ENCODE measurements at regions of chr7 and their contacts with region 1.

Region 1: GRCh38 chr7:150898475-150899011 is 46.2 kb downstream of the AOC1 start:
- DNase-seq: peak; percentile 85
- ATAC-seq: peak; percentile 89
- H3K4me3 Mint-ChIP-seq: no peak overlapping the region
- H3K27ac Mint-ChIP-seq: no peak overlapping the region
- H3K4me1 Mint-ChIP-seq: peaks cover 14% of the 10 kb centered on the region
- H3K27me3 Mint-ChIP-seq: peaks cover 58% of the 10 kb centered on the region
- CTCF ChIP-seq: peak; percentile 98

Region 2: GRCh38 chr7:150871601-150872000 is 26.9 kb before region 1 on chr7:
- CTCF ChIA-PET with region 1: interaction called, 48 read pairs
- POLR2A ChIA-PET with region 1: no interaction called
- intact Hi-C with region 1: no loop called
- DNase-seq: no peak
- ATAC-seq: no peak
- H3K4me3 Mint-ChIP-seq: no peak overlapping the region
- H3K27ac Mint-ChIP-seq: no peak overlapping the region
- H3K4me1 Mint-ChIP-seq: peaks cover 10% of the 10 kb centered on the region
- H3K27me3 Mint-ChIP-seq: peaks cover 8% of the 10 kb centered on the region
- CTCF ChIP-seq: no peak

Region 3: GRCh38 chr7:150917969-150918368 is 19.4 kb after region 1 on chr7:
- CTCF ChIA-PET with region 1: interaction called, 32 read pairs
- POLR2A ChIA-PET with region 1: no interaction called
- intact Hi-C with region 1: no loop called
- DNase-seq: no peak
- ATAC-seq: no peak
- H3K4me3 Mint-ChIP-seq: no peak overlapping the region
- H3K27ac Mint-ChIP-seq: no peak overlapping the region
- H3K4me1 Mint-ChIP-seq: no peaks in the 10 kb centered on the region
- H3K27me3 Mint-ChIP-seq: peaks cover 9% of the 10 kb centered on the region
- CTCF ChIP-seq: no peak

Region 4: GRCh38 chr7:150962553-150963399 is 64.2 kb after region 1 on chr7:
- CTCF ChIA-PET with region 1: interaction called, 11 read pairs
- POLR2A ChIA-PET with region 1: no interaction called
- intact Hi-C with region 1: no loop called
- DNase-seq: peak; percentile 69
- ATAC-seq: peak; percentile 98
- H3K4me3 Mint-ChIP-seq: no peak overlapping the region
- H3K27ac Mint-ChIP-seq: no peak overlapping the region
- H3K4me1 Mint-ChIP-seq: peaks cover 2% of the 10 kb centered on the region
- H3K27me3 Mint-ChIP-seq: peaks cover 16% of the 10 kb centered on the region
- CTCF ChIP-seq: peak; percentile 90

Region 5: DNA sequence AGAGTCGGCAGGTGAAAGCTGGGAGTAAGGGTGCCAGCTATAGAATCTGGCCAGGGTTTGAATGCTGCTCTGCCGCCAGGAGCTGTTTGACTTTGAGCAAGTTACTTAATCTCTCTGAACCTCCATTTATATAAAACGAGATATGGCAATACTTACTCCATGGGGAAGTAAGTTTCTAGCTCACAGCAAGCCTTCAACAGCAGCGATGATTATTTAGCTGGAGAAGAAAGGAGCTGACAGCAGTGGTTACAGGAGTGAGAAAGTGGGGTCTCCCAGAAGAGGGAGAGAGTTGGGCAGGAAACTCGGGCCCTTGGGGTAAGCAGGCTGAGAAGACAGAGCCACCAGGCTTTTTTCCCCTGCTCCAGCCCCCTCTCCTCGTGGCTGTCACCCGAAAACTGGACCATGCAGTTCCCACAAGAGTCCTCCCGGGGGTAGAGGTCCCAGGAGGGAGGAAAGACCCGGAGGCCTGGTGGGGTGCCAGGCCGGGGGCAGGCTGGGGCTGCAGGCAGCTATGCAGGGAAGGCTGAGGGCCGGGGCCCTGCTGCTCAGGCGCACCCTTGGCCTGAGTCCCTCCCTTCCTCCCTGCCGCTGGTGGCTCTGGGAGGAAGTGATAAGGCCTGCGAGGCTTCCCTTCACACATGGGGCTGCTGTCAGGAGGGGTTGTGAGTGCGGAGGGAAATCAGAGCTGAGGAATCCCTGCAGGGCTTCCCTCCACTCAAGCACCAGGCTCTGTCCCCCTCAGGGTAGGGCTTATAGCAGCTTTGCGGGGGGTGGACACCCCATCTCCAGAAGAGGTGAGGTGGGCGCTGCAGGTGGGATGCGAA is 95.8 kb after region 1 on chr7:
- CTCF ChIA-PET with region 1: interaction called, 19 read pairs
- POLR2A ChIA-PET with region 1: no interaction called
- intact Hi-C with region 1: loop called (anchors 2 kb)
- DNase-seq: no peak
- ATAC-seq: peak; percentile 66
- H3K4me3 Mint-ChIP-seq: peak overlapping the region; percentile 15
- H3K27ac Mint-ChIP-seq: no peak overlapping the region
- H3K4me1 Mint-ChIP-seq: peaks cover 35% of the 10 kb centered on the region
- H3K27me3 Mint-ChIP-seq: no peaks in the 10 kb centered on the region
- CTCF ChIP-seq: no peak

Region 6: GRCh38 chr7:151110941-151111645 is 212.6 kb after region 1 on chr7:
- CTCF ChIA-PET with region 1: interaction called, 14 read pairs
- POLR2A ChIA-PET with region 1: no interaction called
- intact Hi-C with region 1: no loop called
- DNase-seq: peak; percentile 83
- ATAC-seq: peak; percentile 74
- H3K4me3 Mint-ChIP-seq: no peak overlapping the region
- H3K27ac Mint-ChIP-seq: no peak overlapping the region
- H3K4me1 Mint-ChIP-seq: peaks cover 4% of the 10 kb centered on the region
- H3K27me3 Mint-ChIP-seq: peaks cover 17% of the 10 kb centered on the region
- CTCF ChIP-seq: peak; percentile 91

Region 7: DNA sequence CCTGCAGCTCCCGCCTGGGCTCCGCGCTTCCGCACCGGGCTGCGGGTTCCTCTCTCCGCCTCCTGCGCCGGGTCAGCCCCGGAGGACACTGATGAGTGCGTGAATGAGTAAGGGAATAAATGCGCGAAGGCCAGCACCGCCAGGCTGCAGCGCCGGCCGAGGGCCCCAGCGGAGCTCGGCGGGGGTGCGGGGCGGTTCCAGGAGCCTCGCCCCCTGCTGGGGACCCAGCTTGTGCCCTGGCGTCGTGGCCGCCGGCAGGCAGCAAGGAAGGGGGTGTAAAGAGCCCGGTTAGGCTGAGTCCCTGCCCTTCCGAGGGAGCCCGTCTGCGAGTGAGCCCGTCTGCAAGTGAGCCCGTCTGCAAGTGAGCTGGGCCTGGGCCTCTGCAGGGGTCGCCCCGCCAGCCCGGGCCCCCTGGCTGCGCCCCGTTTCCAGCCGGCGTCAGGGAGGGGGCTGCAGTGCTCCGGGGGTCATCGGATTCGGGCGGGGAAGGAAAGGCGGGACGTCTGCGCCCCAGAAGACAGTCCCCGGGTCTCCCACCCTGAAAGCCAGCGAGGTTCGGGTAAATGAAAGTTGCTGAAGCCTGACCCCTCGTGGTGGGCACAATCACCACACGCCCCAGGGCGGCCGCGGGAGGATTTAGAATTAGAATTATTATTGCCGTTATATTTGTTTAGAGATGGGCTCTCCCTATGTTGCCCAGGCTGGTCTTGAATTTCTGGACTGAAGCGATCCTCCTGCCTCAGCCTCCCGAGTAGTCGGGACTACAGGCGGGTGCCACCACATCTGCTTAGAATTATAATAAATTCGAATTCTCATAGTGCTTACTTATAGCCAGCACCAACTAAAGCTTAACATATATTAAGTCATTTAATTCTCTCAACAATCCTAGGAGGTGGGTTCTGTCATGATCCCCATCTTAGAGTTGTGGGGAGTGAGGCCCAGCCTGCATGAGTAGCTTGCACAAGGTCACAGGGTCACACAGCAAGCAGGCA is 550.0 kb after region 1 on chr7:
- CTCF ChIA-PET with region 1: no interaction called
- POLR2A ChIA-PET with region 1: no interaction called
- intact Hi-C with region 1: no loop called
- DNase-seq: peak; percentile 86
- ATAC-seq: peak; percentile 83
- H3K4me3 Mint-ChIP-seq: peak overlapping the region; percentile 57
- H3K27ac Mint-ChIP-seq: no peak overlapping the region
- H3K4me1 Mint-ChIP-seq: peaks cover 11% of the 10 kb centered on the region
- H3K27me3 Mint-ChIP-seq: peaks cover 5% of the 10 kb centered on the region
- CTCF ChIP-seq: peak; percentile 90

Measured in activated CD8-positive, alpha-beta T cell treated with anti-CD3 and anti-CD28 coated beads for 36 hours (primary cell).